ENCODE measurements at regions of chr9 and their contacts with region 1.

Region 1: GRCh38 chr9:21395778-21396717 is 10.8 kb upstream of the IFNA2 start:
- DNase-seq: peak; percentile 45
- H3K4me3 ChIP-seq: peak overlapping the region in 2 of 3 experiments; percentile 30 to 32
- H3K27ac ChIP-seq: no peak overlapping the region
- H3K4me1 ChIP-seq: no peaks in the 10 kb centered on the region
- H3K27me3 ChIP-seq: peaks cover 31 to 78% of the 10 kb centered on the region in 2 experiments
- CTCF ChIP-seq: peak; percentile 88 to 93
- POLR2A ChIP-seq: no peak

Region 2: DNA sequence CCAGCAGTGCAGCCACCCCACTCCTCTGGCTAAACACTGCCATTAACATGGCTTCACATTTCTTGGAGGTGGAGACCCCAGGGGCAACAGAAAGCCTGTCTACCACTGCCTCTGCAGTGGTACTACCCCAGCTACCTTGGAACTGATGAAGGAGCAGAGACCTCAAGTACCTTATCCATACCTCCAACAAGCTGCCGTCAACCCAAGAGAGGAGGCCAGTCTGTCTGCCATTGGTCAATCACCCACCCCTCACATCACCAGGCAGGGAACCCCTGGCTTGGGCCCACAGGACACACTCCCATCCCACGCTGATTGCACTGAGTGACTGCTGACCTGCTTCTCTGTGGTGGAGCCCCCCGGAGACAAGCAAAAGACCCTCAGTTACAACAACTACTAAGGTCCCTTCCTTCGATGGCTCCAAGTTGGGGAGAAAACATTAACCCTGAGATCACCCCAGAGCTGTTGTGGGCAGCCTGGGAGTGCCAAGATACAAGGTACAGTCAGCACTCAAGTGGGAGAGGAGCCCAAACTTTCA is 161.8 kb before region 1 on chr9:
- CTCF ChIA-PET with region 1: interaction called, 63 read pairs
- POLR2A ChIA-PET with region 1: no interaction called
- dilution Hi-C with region 1: no loop called
- intact Hi-C with region 1: loop called (anchors 2 kb)
- DNase-seq: no peak
- H3K4me3 ChIP-seq: no peak overlapping the region
- H3K27ac ChIP-seq: no peak overlapping the region
- H3K4me1 ChIP-seq: no peaks in the 10 kb centered on the region
- H3K27me3 ChIP-seq: peaks cover 2 to 4% of the 10 kb centered on the region in 2 experiments
- CTCF ChIP-seq: no peak
- POLR2A ChIP-seq: no peak

Region 3: DNA sequence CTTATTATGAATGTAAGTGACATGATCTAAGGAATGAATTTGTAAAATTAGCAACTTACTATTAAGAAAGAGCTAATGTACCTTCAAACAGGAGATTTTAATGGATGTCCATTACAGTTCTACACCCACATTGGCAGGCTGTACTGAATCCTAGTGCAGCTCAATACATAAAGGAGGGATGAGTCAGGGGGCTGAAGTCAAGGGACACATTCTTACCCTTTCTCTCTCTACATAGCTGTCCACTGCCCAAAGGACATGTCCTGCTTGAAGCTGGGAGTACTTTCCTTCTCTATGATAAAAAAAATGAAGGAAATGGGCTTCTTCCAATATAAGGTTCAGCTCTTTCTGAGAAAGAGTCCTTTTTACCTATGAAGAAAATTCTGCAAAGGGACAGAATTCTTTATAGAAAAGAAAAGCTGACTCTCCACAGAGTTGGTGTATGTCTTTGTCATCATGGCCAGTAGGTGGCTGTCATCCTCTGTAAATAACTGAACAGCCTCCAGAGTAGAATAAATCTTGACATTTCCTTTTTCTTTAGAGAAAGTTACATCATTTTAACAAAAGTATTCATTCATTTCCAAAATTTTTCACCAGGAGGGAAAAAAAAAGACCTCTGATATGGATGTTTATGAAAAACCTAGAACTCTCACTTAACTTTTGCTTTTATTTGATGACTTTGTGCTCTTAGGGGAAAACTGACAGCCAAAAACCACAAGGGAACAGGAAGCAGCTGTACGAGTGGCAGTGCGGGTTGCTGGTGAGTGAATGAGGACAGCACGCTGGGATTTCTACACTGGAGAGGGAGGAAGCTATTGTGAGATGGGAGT is 143.1 kb before region 1 on chr9:
- CTCF ChIA-PET with region 1: interaction called, 63 read pairs
- POLR2A ChIA-PET with region 1: no interaction called
- dilution Hi-C with region 1: no loop called
- intact Hi-C with region 1: loop called (anchors 1 kb)
- DNase-seq: peak; percentile 79
- H3K4me3 ChIP-seq: no peak overlapping the region
- H3K27ac ChIP-seq: no peak overlapping the region
- H3K4me1 ChIP-seq: peaks cover 3% of the 10 kb centered on the region
- H3K27me3 ChIP-seq: peaks cover 34 to 51% of the 10 kb centered on the region in 2 experiments
- CTCF ChIP-seq: peak; percentile 29 to 48
- POLR2A ChIP-seq: no peak

Region 4: GRCh38 chr9:21326526-21327139 is 69.4 kb before region 1 on chr9:
- CTCF ChIA-PET with region 1: interaction called, 105 read pairs
- POLR2A ChIA-PET with region 1: interaction called, 3 read pairs
- dilution Hi-C with region 1: no loop called
- intact Hi-C with region 1: loop called (anchors 1 kb)
- DNase-seq: peak; percentile 54
- H3K4me3 ChIP-seq: no peak overlapping the region
- H3K27ac ChIP-seq: no peak overlapping the region
- H3K4me1 ChIP-seq: peaks cover 15% of the 10 kb centered on the region
- H3K27me3 ChIP-seq: no peaks in the 10 kb centered on the region
- CTCF ChIP-seq: peak; percentile 33 to 46
- POLR2A ChIP-seq: no peak

Region 5: GRCh38 chr9:21367957-21368356 is 28.1 kb before region 1 on chr9 and contains the start of gene IFNA13:
- CTCF ChIA-PET with region 1: interaction called, 13 read pairs
- POLR2A ChIA-PET with region 1: no interaction called
- dilution Hi-C with region 1: no loop called
- intact Hi-C with region 1: no loop called
- DNase-seq: no peak
- H3K4me3 ChIP-seq: no peak within 1 kb of the TSS
- H3K27ac ChIP-seq: no peak within 1 kb of the TSS
- H3K4me1 ChIP-seq: no peaks in the 10 kb centered on the region
- H3K27me3 ChIP-seq: peaks cover 1 to 28% of the 10 kb centered on the region in 2 experiments
- CTCF ChIP-seq: no peak
- POLR2A ChIP-seq: no peak
- total RNA-seq, gene IFNA13: not detected in 2 replicates

Region 6: GRCh38 chr9:21408817-21409216 is 12.8 kb after region 1 on chr9 and contains the start of gene IFNA8:
- CTCF ChIA-PET with region 1: interaction called, 16 read pairs
- POLR2A ChIA-PET with region 1: no interaction called
- dilution Hi-C with region 1: no loop called
- intact Hi-C with region 1: no loop called
- DNase-seq: no peak
- H3K4me3 ChIP-seq: no peak within 1 kb of the TSS
- H3K27ac ChIP-seq: no peak within 1 kb of the TSS
- H3K4me1 ChIP-seq: no peaks in the 10 kb centered on the region
- H3K27me3 ChIP-seq: peaks cover 30 to 76% of the 10 kb centered on the region in 2 experiments
- CTCF ChIP-seq: no peak
- POLR2A ChIP-seq: no peak
- total RNA-seq, gene IFNA8: not detected in 2 replicates

Region 7: GRCh38 chr9:21491742-21492141 is 95.7 kb after region 1 on chr9:
- CTCF ChIA-PET with region 1: no interaction called
- POLR2A ChIA-PET with region 1: no interaction called
- dilution Hi-C with region 1: no loop called
- intact Hi-C with region 1: no loop called
- DNase-seq: peak; percentile 21
- H3K4me3 ChIP-seq: no peak overlapping the region
- H3K27ac ChIP-seq: no peak overlapping the region
- H3K4me1 ChIP-seq: no peaks in the 10 kb centered on the region
- H3K27me3 ChIP-seq: no peaks in the 10 kb centered on the region
- CTCF ChIP-seq: no peak
- POLR2A ChIP-seq: no peak

Region 8: GRCh38 chr9:21831961-21832509 is 436.0 kb after region 1 on chr9:
- CTCF ChIA-PET with region 1: no interaction called
- POLR2A ChIA-PET with region 1: no interaction called
- dilution Hi-C with region 1: no loop called
- intact Hi-C with region 1: no loop called
- DNase-seq: peak; percentile 80
- H3K4me3 ChIP-seq: no peak overlapping the region
- H3K27ac ChIP-seq: peak overlapping the region; percentile 84
- H3K4me1 ChIP-seq: peaks cover 32% of the 10 kb centered on the region
- H3K27me3 ChIP-seq: no peaks in the 10 kb centered on the region
- CTCF ChIP-seq: no peak
- POLR2A ChIP-seq: no peak

Region 9: GRCh38 chr9:22316645-22317044 is 920.6 kb after region 1 on chr9:
- CTCF ChIA-PET with region 1: no interaction called
- POLR2A ChIA-PET with region 1: no interaction called
- dilution Hi-C with region 1: no loop called
- intact Hi-C with region 1: no loop called
- DNase-seq: no peak
- H3K4me3 ChIP-seq: no peak overlapping the region
- H3K27ac ChIP-seq: no peak overlapping the region
- H3K4me1 ChIP-seq: no peaks in the 10 kb centered on the region
- H3K27me3 ChIP-seq: no peaks in the 10 kb centered on the region
- CTCF ChIP-seq: no peak
- POLR2A ChIP-seq: no peak

Measured in endothelial cell of umbilical vein (primary cell).